BJ (cell line): ENCODE measurements at regions of chr11 and their contacts with region 1.

Region 1: GRCh38 chr11:112113539-112114457 is 27.1 kb downstream of the SDHD start:
- DNase-seq: no peak
- H3K4me3 ChIP-seq: no peak overlapping the region
- H3K27me3 ChIP-seq: no peaks in the 10 kb centered on the region
- CTCF ChIP-seq: peak; percentile 69

Region 2: GRCh38 chr11:111886844-111887243 is 227.0 kb before region 1 on chr11:
- CTCF ChIA-PET with region 1: no interaction called
- POLR2A ChIA-PET with region 1: no interaction called
- DNase-seq: no peak
- H3K4me3 ChIP-seq: no peak overlapping the region
- H3K27me3 ChIP-seq: no peaks in the 10 kb centered on the region
- CTCF ChIP-seq: no peak

Region 3: GRCh38 chr11:112100462-112100861 is 13.3 kb before region 1 on chr11:
- CTCF ChIA-PET with region 1: interaction called, 48 read pairs
- POLR2A ChIA-PET with region 1: interaction called, 9 read pairs
- DNase-seq: no peak
- H3K4me3 ChIP-seq: no peak overlapping the region
- H3K27me3 ChIP-seq: no peaks in the 10 kb centered on the region
- CTCF ChIP-seq: no peak

Region 4: DNA sequence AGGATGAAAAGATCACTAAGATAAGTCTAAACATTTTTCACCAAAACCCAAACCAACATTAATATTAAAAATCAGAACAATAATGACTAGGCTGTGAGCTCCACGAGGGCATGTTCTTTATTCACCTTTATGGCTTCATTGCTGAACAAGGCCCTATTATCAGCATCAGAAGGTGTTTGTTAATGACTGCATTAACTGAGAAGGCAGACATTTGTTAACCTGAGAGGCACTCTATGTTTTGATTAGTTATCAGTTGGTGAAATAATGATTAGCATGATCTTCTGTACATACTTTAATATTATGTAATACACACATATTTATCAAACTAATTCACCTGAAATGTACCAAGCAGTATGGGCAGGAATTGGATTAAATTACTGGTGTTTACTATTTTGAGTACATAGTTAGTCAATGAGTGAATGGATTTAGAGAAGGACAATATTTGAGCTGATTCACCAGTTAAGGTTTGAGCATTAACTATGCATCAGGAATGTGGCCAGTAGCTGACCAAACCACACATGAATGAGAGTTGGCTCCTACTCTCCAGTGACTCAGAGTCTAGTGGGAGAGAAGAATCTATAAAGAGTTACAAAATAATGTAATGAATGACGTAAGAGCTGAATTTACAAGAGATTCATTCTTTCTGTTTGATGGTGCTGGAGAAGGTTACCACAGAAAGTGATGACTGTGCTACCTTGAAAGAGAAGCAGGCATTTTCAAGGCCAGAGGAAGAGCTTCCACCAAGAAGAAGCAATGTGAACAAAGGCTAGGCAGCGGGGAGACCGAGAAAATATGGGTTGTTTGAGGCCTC is 43.4 kb after region 1 on chr11:
- CTCF ChIA-PET with region 1: interaction called, 11 read pairs
- POLR2A ChIA-PET with region 1: no interaction called
- DNase-seq: peak; percentile 99
- H3K4me3 ChIP-seq: no peak overlapping the region
- H3K27me3 ChIP-seq: no peaks in the 10 kb centered on the region
- CTCF ChIP-seq: no peak

Region 5: GRCh38 chr11:112163875-112164685 is 50.3 kb after region 1 on chr11 and contains the start of gene IL18:
- CTCF ChIA-PET with region 1: interaction called, 11 read pairs
- POLR2A ChIA-PET with region 1: no interaction called
- DNase-seq: no peak
- H3K4me3 ChIP-seq: no peak within 1 kb of the TSS
- H3K27me3 ChIP-seq: no peaks in the 10 kb centered on the region
- CTCF ChIP-seq: no peak
- polyA plus RNA-seq, gene IL18: 1.5 and 2.7 TPM in 2 replicates

Region 6: GRCh38 chr11:112174789-112175598 is 61.2 kb after region 1 on chr11 and contains the start of gene BCO2:
- CTCF ChIA-PET with region 1: interaction called, 40 read pairs
- POLR2A ChIA-PET with region 1: no interaction called
- DNase-seq: peak; percentile 42
- H3K4me3 ChIP-seq: peak within 1 kb of the TSS; percentile 14; the same call in 1 of the 2 replicates
- H3K27me3 ChIP-seq: no peaks in the 10 kb centered on the region
- CTCF ChIP-seq: peak; percentile 83
- polyA plus RNA-seq, gene BCO2: 0.56 and 0.85 TPM in 2 replicates

Region 7: GRCh38 chr11:112219476-112220232 is 105.9 kb after region 1 on chr11:
- CTCF ChIA-PET with region 1: interaction called, 30 read pairs
- POLR2A ChIA-PET with region 1: no interaction called
- DNase-seq: no peak
- H3K4me3 ChIP-seq: no peak overlapping the region
- H3K27me3 ChIP-seq: no peaks in the 10 kb centered on the region
- CTCF ChIP-seq: peak; percentile 61

Region 8: DNA sequence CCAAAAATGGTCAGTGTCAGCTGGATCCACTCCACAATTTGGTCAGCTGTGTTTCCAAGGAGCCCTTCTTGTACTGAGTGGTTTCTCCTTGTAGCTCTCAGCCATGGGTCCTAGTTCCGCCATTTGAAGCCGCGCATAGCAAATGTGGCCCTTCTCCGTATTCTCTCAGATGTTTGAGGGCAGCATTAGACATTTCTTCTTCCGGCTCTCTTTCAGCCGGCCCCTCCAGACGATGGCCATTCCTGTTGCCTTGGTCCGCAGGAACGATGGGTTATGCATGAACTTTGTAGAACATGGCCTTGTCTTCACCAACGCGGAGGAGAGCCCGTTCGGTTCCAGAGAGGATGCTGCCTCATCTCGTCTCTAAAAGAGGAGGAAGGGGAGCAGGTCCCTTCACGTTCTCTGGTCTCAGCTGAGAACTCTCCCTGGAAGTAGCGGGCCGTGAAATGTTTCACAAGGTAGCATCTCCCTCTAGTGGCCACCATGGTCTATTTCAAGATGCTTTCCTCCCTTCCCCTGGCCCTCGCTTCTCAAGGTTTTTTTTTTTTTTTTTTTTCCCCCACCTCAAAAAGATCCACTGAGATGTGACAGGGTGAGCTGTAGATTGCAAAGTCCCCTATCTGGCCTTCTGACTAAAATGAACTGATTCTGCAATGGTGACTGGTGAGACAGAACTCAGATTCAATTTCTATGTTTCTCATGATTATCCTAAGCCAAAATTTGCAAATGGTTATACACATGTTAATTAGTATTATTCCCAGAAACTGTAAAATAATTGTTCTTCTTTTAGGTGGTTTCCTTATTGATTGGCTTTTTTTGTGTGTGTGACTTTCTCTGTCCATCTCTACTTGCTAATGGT is 166.7 kb after region 1 on chr11:
- CTCF ChIA-PET with region 1: interaction called, 58 read pairs
- POLR2A ChIA-PET with region 1: no interaction called
- DNase-seq: no peak
- H3K4me3 ChIP-seq: peak overlapping the region; percentile 33
- H3K27me3 ChIP-seq: peaks cover 1% of the 10 kb centered on the region; the same call in 1 of the 2 replicates
- CTCF ChIP-seq: peak; percentile 79

Region 9: DNA sequence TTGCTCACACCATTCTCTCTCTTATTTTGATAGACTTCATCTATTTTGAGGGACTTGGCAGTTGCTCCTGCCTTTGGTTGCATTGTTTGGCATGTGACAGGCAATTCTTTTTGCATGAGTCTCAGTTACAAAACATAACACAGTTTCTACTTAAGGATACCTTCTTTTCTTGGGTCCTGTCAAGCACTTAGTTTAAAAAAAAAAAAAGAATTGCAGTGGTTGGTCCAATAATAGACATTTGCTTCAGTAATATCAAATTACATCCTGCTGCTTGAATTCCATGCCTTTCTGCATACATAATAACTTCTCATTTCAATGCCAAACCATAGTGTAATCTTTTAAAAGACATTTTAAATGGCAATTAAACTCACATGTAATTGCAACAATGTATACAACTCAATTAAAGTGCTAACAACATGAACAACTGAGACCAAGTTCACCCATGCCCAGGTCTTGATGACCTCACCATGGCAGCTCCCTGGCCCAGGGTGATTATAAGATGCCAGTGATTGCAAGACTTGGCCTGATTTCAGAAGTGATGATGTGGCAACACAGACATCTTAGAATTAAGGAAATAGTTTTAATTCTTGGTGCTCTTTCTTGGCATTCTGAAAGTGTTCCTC is 179.1 kb after region 1 on chr11:
- CTCF ChIA-PET with region 1: no interaction called
- POLR2A ChIA-PET with region 1: no interaction called
- DNase-seq: peak; percentile 92
- H3K4me3 ChIP-seq: no peak overlapping the region
- H3K27me3 ChIP-seq: no peaks in the 10 kb centered on the region
- CTCF ChIP-seq: no peak